Upper lobe of right lung (tissue), 1 donor: ENCODE measurements at regions of chr7 and their contacts with region 1.

Region 1: GRCh38 chr7:158050978-158051651 is 536.5 kb downstream of the PTPRN2 start:
- DNase-seq: peak; percentile 46
- ATAC-seq: peak; percentile 16
- H3K4me3 ChIP-seq: no peak overlapping the region
- H3K27ac ChIP-seq: no peak overlapping the region
- H3K4me1 ChIP-seq: no peaks in the 10 kb centered on the region
- H3K27me3 ChIP-seq: no peaks in the 10 kb centered on the region
- CTCF ChIP-seq: no peak

Region 2: DNA sequence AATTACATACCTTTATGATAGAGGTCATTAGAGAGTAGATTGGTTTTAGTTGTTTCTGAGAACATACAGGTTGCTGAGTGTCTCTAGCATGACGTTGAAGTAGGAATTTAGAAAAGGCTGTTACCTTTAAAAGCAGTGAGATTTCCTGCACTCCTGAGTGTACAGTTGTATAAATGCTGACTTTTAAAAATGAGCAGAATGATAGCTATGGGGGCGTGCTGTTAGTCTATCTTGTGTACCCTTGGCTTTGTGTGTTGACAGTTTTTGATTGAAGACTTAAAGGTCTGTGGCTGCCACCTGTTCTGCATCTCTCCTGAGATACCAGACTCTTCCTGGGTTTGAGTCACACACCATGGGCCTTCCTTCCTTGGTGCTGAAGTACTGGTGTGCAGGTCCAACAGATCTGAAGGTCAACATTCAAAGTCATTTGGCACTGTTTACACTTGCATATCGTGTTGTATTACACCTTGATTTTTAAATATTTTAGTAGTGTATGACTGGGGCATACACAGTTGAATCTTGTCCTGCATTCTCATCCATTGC is 690.6 kb before region 1 on chr7:
- intact Hi-C with region 1: loop called (anchors 10 kb)
- DNase-seq: no peak
- ATAC-seq: no peak
- H3K4me3 ChIP-seq: no peak overlapping the region
- H3K27ac ChIP-seq: no peak overlapping the region
- H3K4me1 ChIP-seq: peaks cover 18% of the 10 kb centered on the region
- H3K27me3 ChIP-seq: no peaks in the 10 kb centered on the region
- CTCF ChIP-seq: no peak

Region 3: GRCh38 chr7:157863906-157864803 is 187.0 kb before region 1 on chr7:
- intact Hi-C with region 1: no loop called
- DNase-seq: no peak
- ATAC-seq: peak; percentile 4
- H3K4me3 ChIP-seq: no peak overlapping the region
- H3K27ac ChIP-seq: no peak overlapping the region
- H3K4me1 ChIP-seq: no peaks in the 10 kb centered on the region
- H3K27me3 ChIP-seq: no peaks in the 10 kb centered on the region
- CTCF ChIP-seq: no peak